Right cardiac atrium (tissue), 5 donors: ENCODE measurements at regions of chr2 and their contacts with region 1.

Region 1: DNA sequence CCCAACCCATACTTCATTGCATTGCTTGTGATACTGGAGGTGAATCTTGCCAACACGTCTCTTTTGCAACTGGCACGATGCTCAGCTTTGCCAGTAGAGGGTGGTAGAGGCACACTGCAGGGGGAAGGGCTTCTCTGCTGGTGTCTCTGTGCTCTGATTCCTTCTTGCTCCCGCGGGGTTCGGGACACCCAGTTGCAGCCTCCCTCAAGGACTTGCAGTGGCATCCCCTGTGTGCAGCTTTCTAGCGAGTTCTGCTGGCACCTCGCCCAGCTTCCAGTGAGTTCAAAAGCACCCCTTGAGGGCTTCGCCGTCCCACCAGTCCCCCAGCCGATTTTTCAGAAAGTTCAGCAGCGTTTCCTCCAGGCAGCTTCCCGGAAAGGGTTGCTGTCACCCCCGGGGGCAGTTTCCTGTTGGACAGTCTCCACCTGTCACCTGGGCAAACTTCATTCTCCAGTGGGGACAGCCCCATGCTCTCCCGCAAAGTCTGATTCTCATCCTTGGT is 35.3 kb upstream of the EN1 start:
- DNase-seq: peak; percentile 44 to 76 (median 75)
- ATAC-seq: peak; percentile 75 to 77
- H3K4me3 ChIP-seq: no peak overlapping the region
- H3K27ac ChIP-seq: no peak overlapping the region
- H3K4me1 ChIP-seq: no peaks in the 10 kb centered on the region
- H3K27me3 ChIP-seq: no peaks in the 10 kb centered on the region

Region 2: GRCh38 chr2:119283860-119284331 is 401.1 kb after region 1 on chr2:
- intact Hi-C with region 1: loop called in 1 of 4 experiments (anchors 10 kb)
- DNase-seq: peak; percentile 74 to 83 (median 78)
- ATAC-seq: peak; percentile 88 to 89
- H3K4me3 ChIP-seq: no peak overlapping the region
- H3K27ac ChIP-seq: peak overlapping the region; percentile 6
- H3K4me1 ChIP-seq: no peaks in the 10 kb centered on the region
- H3K27me3 ChIP-seq: no peaks in the 10 kb centered on the region

Region 3: DNA sequence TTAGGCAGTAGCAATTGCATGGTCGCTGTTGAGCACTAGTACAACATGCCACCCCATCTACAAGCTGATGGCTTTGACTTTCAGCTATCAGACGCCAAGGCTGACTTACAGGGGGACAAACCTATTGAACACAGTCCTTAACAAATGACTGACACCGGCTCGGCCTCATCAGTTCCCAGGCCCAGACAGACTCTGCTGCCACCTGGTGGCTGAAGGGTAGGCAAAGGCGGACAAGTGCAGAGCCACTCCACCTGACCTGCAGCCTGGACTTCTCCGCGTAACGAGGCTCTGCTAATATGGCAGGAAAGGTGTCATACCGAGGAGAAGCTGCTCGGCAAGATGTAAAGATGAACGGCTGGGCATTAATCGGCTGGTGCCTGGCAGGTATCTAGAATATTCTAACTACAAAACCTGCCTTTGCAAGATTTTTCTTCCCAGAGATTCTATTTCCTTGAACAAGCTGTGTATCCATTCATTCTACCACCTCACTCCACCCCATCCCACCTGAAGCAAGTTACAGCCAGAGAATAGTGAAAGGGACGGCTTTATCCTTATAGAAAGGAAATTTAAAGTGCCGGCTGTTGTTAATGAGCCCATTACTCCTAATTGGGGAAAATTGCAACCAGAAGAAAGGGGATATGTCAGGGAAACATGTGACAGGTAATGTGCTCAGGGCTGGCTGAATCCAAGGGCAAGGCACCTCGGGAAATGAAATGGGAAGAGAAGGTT is 408.3 kb after region 1 on chr2:
- intact Hi-C with region 1: loop called in 3 of 4 experiments (anchors 5 to 10 kb)
- DNase-seq: peak; percentile 89 to 91 (median 89)
- ATAC-seq: peak; percentile 73 to 90
- H3K4me3 ChIP-seq: no peak overlapping the region
- H3K27ac ChIP-seq: no peak overlapping the region
- H3K4me1 ChIP-seq: no peaks in the 10 kb centered on the region
- H3K27me3 ChIP-seq: no peaks in the 10 kb centered on the region